ENCODE measurements at regions of chr5 and their contacts with region 1.

Region 1: DNA sequence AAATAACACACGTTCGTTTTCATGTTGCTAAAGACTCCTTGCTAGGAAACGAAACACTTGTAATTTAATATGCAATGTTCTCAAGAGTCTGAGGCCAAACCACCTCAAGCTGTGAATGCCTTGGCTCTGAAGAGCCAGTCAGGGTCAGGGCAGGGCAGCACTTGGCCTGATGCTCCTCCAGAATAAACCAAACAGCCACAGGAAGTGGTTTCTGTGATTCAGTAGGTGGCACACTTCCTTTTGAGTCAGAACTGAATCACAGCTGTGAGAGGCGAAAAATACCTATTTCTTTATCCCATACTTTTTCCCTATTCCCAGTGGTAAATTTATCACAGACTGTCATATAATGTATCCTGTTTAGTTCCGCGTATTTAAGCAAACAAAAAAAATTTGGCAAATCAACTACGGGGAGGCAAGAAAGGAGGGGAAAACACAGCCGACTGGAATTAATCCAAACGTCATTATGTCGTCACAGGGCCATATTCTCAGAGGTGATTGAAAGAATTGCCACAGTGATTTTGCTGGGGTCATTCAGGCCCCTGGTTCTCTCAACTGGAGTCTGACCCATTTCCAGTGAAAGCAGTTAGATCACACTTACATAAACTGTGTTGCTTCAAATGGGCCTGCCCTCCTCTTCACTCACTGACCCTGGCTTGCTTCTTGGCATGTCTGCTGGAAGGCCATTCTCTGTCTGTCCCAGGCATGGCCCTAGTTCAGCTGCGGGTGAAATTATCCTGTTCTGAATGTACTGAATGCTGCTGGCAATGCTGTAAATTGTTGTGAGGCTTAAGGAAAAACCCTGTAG is 71.2 kb downstream of the ARRDC3 start:
- DNase-seq: peak; percentile 59
- H3K4me3 Mint-ChIP-seq: no peak overlapping the region
- H3K27ac Mint-ChIP-seq: peak overlapping the region; percentile 69
- H3K4me1 Mint-ChIP-seq: peaks cover 44% of the 10 kb centered on the region
- H3K27me3 Mint-ChIP-seq: no peaks in the 10 kb centered on the region

Region 2: DNA sequence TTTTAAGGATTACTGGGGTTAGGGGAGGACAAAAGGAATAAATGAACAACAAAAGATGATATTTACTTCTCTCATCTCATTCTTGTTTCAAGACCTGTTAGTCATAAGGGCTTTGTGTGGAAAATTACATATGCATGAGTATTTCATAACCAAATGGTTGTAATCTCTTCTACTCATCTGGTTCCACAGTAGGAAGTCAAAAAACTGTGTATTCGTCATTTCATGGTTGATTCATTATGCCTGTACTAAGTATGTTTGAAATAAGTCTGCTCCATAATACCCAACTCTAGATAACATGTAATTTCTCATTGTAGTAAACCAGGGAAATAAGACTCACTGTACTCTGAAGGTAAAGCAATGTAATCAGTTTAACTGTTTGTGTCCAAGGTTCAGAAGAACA is 141.6 kb before region 1 on chr5:
- intact Hi-C with region 1: loop called (anchors 1 kb)
- DNase-seq: no peak
- H3K4me3 Mint-ChIP-seq: no peak overlapping the region
- H3K27ac Mint-ChIP-seq: peak overlapping the region; percentile 81
- H3K4me1 Mint-ChIP-seq: peaks cover 34% of the 10 kb centered on the region
- H3K27me3 Mint-ChIP-seq: no peaks in the 10 kb centered on the region

Region 3: DNA sequence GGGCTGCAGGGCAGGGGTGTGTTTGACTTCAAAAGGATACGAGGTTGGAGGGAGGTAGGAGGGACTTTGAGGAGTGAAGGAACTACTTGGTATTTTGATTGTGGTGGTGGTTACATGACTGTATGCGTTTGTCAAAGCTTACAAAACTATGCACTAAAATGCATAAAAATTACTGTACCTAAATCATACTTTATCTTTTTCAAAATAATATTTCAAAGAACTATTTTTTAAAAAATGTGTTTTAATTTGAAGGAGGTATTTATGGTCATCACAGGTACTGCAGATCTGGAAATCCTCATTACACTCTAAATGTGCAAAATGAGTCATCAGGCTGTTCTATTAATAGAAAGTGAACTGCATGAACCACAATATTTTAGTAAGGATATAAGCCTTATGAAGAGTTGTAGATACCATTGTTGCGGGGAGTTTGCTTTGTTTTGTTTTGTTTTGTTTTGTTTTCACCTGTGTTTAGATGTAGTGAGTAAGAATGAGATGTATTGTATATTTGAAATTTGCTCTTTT is 45.7 kb before region 1 on chr5:
- intact Hi-C with region 1: loop called (anchors 1 kb)
- DNase-seq: no peak
- H3K4me3 Mint-ChIP-seq: no peak overlapping the region
- H3K27ac Mint-ChIP-seq: no peak overlapping the region
- H3K4me1 Mint-ChIP-seq: peaks cover 25% of the 10 kb centered on the region
- H3K27me3 Mint-ChIP-seq: peaks cover 2% of the 10 kb centered on the region

Region 4: GRCh38 chr5:91293131-91293530 is 18.8 kb before region 1 on chr5:
- intact Hi-C with region 1: loop called (anchors 2 kb)
- DNase-seq: no peak
- H3K4me3 Mint-ChIP-seq: no peak overlapping the region
- H3K27ac Mint-ChIP-seq: no peak overlapping the region
- H3K4me1 Mint-ChIP-seq: peaks cover 20% of the 10 kb centered on the region
- H3K27me3 Mint-ChIP-seq: peaks cover 2% of the 10 kb centered on the region

Measured in activated T-helper 2 cell treated with anti-CD3 and anti-CD28 coated beads, Interferon-gamma antibody, Interleukin-2, Interleukin-4, amounts not matched to agents 10 μg/mL and 5 μg/mL and 100 μg/mL, durations not matched to agents 14 hours and 24 hours and 36 hours (primary cell).